ENCODE measurements at regions of chr16 and their contacts with region 1.

Region 1: GRCh38 chr16:74501484-74502479 is 80.5 kb upstream of the CLEC18B start:
- DNase-seq: no peak
- ATAC-seq: peak; percentile 53 to 75

Region 2: GRCh38 chr16:74623214-74623842 is 121.5 kb after region 1 on chr16:
- intact Hi-C with region 1: loop called in 1 of 2 experiments (anchors 10 kb)
- DNase-seq: no peak
- ATAC-seq: peak in 1 of 2 donors; percentile 45

Region 3: DNA sequence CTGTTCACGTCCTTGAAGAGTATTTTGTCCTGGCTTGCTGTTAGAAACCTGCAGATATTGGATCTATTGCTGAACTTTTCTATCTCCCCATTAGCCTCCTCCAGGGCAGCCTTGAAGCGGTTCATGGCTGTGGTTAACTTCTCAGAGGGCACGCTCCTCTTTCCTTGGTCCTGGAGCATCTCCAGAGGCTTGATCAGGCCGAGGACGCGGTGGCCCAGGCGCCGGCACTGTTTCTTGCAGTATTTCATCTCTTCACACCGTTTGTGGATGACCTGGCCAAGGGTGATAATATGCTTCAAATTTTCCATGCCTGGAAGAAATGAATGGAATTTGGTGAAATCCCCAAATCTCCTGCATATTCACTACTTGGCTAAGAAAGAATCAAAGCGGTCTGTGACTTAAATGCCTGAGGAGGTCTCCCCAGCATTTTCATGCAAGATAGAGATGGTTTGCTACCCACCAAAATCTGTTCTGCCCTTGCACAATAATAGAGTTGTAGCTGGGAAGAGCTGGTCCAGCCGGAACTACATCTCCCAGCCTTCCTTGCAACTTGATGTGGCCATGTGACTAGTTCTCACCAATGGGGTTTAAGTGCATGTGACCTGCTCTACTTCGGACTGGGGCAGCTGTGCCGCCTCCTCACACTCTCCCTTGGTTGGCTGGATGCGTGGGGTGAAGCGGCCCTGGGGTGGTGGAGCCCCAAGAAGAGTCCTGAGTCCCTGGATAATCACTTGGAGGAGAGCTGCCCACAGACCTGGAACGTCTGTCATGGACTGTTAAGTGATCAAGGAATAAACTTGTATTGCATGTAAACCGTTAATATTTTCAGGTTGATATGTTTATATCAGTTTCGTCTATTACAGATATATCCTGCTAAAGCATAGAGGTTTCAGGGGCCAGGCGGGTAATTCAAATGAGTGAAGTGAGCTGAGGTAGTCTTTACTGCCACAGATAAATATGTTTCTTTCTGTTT is 194.0 kb after region 1 on chr16:
- intact Hi-C with region 1: no loop called
- DNase-seq: peak; percentile 80
- ATAC-seq: peak; percentile 96 to 97